Right ventricle myocardium superior (tissue), 1 donor: ENCODE measurements at regions of chr6 and their contacts with region 1.

Region 1: GRCh38 chr6:37691904-37692806 is 5.5 kb downstream of the MDGA1 start:
- DNase-seq: peak; percentile 84
- ATAC-seq: peak; percentile 83

Region 2: DNA sequence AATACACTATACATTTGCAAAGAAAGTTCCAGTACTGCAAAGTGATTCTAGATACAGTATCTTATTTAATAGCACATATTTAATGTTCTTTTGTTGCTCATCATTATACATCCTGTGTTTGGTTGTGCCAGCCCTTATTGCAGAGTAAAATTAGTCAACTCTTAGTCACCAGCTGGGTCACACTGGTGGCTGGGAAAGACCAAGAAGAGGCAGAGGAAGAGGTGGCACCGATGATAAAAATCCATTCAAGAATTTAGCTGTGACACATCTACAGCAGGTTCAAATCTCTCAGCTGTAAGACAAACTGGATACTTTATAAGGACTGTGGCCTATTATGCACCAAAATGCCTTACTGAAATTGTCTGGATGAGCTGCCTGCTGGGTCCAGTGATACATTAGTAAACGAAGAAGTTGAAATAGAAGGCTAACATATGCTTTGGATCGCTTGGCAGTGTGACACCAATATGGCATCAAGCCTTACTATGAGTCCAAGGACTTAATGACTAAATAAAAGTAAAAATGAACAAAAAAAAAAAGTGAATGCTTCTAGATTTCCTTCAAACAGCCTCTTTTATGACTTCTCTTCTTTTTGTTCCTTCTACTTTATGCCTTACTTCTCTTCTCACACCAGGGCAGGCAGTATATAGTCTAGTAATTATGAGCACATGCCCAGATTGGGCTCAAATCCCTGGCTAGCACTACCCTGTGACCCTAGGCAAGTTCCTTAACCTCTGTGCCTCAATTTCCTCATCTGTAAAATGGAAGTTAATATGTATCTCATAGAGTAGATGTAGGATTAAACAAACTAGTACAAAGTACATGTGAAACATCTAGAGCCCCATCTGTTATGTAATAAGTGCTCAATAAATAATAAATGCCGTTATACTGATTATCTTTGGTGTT is 367.8 kb before region 1 on chr6:
- intact Hi-C with region 1: loop called (anchors 10 kb)
- DNase-seq: no peak
- ATAC-seq: no peak

Region 3: GRCh38 chr6:37381579-37381978 is 310.6 kb before region 1 on chr6:
- intact Hi-C with region 1: loop called (anchors 10 kb)
- DNase-seq: no peak
- ATAC-seq: peak; percentile 59

Region 4: DNA sequence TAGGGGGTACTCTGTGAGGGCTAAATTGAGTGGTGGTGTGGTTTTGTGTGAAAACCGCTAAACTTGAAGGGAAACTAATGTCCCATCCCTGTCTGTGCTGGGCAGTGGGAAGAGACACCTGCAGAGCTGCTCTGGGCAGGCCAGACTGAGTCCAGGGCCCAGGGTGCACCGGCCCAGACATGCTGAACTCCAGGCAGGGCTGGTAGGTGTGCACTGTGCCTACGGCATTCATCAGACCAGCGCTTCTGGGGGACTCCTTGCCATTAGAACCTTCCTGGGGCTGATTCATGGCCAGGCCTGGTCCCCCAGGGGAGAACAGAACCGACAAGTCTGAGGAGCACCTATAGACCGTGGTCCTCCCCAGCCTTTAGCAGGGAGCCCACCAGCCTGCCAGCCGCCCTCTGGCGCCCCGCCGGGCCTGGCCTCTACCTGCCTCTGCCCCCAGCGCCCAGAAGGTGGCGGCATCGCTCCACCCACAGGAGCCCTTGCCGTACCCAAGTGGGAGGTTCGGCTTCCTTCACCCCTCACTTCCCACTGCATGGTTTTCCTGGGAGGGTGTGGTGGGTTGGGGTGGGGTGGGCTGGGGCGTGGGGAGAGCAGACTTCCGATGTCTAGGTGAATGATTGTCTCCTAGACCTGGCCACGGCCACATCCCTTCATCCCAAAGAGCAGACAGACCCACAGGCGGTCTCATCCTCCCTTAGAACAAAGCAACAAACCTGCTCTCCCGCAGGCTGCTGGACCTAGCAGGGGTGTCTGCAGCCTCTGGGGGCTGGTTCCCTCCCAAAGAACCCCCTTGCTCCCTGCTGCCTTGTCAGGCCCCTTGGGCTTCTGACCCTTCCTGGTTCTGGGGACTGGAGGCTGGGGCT is 208.0 kb before region 1 on chr6:
- intact Hi-C with region 1: loop called (anchors 5 kb)
- DNase-seq: peak; percentile 77
- ATAC-seq: peak; percentile 74

Region 5: DNA sequence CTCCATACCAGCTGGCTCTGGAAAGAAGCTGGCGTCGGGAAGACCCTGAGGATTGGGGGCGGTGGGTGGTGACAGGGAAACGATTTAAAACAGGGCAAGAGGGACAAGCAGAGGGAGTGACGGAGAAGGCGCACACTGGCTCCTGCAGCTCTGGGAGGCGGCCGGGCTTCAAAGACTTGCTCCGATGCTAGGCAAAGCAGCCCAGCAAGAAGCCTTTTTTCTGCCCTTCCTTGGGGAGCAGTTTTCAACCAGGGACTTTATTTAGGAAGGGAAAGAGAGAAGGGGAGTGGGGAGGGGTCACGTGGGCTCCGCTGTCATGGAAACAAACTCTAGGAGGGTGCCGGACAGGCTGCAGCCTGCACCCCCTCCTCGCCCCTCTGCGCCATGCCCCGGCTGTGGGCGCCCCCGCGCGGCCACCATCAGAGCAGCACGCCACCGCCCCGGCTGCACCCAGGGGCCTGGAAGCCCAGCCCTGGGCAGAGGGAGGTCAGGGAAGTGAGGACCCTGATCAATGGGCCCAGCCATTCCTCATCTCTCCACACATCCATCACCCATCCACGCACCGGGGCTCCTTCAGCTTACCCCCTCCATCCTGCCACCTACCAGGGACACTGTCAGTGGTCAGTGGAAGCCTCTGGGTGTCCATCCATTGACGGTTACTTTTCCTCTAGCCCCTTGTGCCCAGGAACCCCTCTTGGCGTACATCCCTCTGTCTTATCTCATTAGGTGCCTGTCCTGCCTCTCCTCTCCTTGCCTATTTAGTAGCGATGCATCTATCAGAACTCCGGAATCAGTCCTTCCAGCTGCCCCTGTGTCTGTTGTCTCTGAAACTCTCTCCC is 125.8 kb before region 1 on chr6:
- intact Hi-C with region 1: loop called (anchors 10 kb)
- DNase-seq: peak; percentile 75
- ATAC-seq: peak; percentile 94

Region 6: DNA sequence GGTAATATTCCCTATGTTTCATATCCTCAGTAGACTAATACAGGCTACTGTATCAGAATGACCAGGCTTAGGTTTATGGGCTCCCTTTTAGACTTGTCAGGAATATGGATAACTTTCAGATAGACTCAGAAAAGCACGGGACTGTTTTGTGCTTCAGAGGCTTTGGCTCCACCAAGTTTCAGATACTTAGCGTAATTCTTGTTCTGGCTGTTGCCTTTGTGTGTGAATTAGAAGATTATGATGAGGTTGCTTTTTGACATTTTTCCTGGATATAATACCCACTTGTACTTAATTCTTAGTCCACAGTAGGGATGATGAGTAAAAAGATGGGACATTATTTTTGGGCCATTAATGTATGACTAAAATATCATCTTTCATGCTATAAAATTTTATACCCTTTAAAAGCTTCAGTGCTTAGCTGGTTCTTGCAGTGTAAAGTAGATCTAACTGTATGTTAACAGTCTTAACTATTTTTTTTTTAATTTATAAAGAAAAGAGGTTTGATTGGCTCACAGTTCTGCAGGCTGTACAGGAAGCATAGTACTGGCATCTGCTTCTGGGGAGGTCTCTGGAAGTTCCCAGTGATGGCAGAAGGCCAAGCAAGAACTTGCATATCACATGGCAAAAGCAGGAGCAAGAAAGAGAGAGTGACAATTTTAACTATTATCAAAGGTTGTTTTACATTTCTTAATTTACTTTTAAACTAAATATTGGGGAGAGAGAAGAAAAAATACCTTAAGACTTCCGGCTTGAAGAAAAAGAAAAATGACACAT is 248.1 kb after region 1 on chr6:
- intact Hi-C with region 1: no loop called
- DNase-seq: no peak
- ATAC-seq: peak; percentile 78